ENCODE measurements at regions of chr1 and their contacts with region 1.

Region 1: DNA sequence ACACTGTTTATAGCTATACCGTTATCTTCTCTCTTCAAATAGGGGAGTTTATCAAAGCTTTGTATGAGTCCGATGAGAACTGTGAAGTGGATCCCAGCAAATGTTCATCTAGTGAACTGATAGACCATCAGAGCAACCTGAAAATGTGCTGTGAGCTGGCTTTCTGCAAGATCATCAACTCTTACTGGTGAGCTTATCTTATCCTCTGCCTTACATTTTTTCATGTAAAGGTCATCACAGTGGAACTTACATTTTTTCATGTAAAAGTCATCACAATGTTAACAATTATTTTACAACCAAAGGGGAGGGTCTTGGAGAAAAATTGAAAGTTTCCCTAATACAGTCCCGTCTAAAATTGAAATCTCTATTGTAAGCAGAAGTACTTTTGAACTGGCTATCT is 45.2 kb downstream of the CLEC20A start:
- DNase-seq: peak; percentile 80
- ATAC-seq: peak; percentile 94
- H3K4me3 ChIP-seq: no peak overlapping the region
- H3K27ac ChIP-seq: no peak overlapping the region
- H3K4me1 ChIP-seq: peaks cover 4% of the 10 kb centered on the region
- H3K27me3 ChIP-seq: no peaks in the 10 kb centered on the region
- CTCF ChIP-seq: no peak
- POLR2A ChIP-seq: no peak
- RAD21 ChIP-seq: no peak

Region 2: GRCh38 chr1:177392336-177392735 is 1059.2 kb before region 1 on chr1:
- CTCF ChIA-PET with region 1: no interaction called
- POLR2A ChIA-PET with region 1: no interaction called
- dilution Hi-C with region 1: no loop called
- in situ Hi-C with region 1: no loop called
- intact Hi-C with region 1: no loop called
- DNase-seq: no peak
- ATAC-seq: no peak
- H3K4me3 ChIP-seq: no peak overlapping the region
- H3K27ac ChIP-seq: no peak overlapping the region
- H3K4me1 ChIP-seq: no peaks in the 10 kb centered on the region
- H3K27me3 ChIP-seq: no peaks in the 10 kb centered on the region
- CTCF ChIP-seq: no peak
- POLR2A ChIP-seq: no peak
- RAD21 ChIP-seq: no peak

Region 3: GRCh38 chr1:178354816-178355215 is 96.7 kb before region 1 on chr1:
- CTCF ChIA-PET with region 1: no interaction called
- POLR2A ChIA-PET with region 1: no interaction called
- dilution Hi-C with region 1: no loop called
- in situ Hi-C with region 1: no loop called
- intact Hi-C with region 1: no loop called
- DNase-seq: no peak
- ATAC-seq: no peak
- H3K4me3 ChIP-seq: no peak overlapping the region
- H3K27ac ChIP-seq: no peak overlapping the region
- H3K4me1 ChIP-seq: peaks cover 3% of the 10 kb centered on the region; the same call in 1 of the 2 replicates
- H3K27me3 ChIP-seq: no peaks in the 10 kb centered on the region
- CTCF ChIP-seq: no peak
- POLR2A ChIP-seq: no peak
- RAD21 ChIP-seq: no peak

Region 4: GRCh38 chr1:178417858-178418257 is 33.7 kb before region 1 on chr1:
- CTCF ChIA-PET with region 1: no interaction called
- POLR2A ChIA-PET with region 1: no interaction called
- dilution Hi-C with region 1: no loop called
- in situ Hi-C with region 1: no loop called
- intact Hi-C with region 1: loop called (anchors 5 kb)
- DNase-seq: peak; percentile 91
- ATAC-seq: peak; percentile 87
- H3K4me3 ChIP-seq: no peak overlapping the region
- H3K27ac ChIP-seq: no peak overlapping the region
- H3K4me1 ChIP-seq: peaks cover 1% of the 10 kb centered on the region; the same call in 1 of the 2 replicates
- H3K27me3 ChIP-seq: no peaks in the 10 kb centered on the region
- CTCF ChIP-seq: no peak
- POLR2A ChIP-seq: no peak
- RAD21 ChIP-seq: no peak

Region 5: GRCh38 chr1:179025125-179025974 is 573.8 kb after region 1 on chr1 and contains the start of gene FAM20B:
- CTCF ChIA-PET with region 1: no interaction called
- POLR2A ChIA-PET with region 1: no interaction called
- dilution Hi-C with region 1: no loop called
- in situ Hi-C with region 1: no loop called
- intact Hi-C with region 1: no loop called
- DNase-seq: peak; percentile 88
- ATAC-seq: peak; percentile 95
- H3K4me3 ChIP-seq: peak within 1 kb of the TSS; percentile 90
- H3K27ac ChIP-seq: peak within 1 kb of the TSS; percentile 33
- H3K4me1 ChIP-seq: no peaks in the 10 kb centered on the region
- H3K27me3 ChIP-seq: no peaks in the 10 kb centered on the region
- CTCF ChIP-seq: no peak
- POLR2A ChIP-seq: no peak
- RAD21 ChIP-seq: no peak
- total RNA-seq, gene FAM20B: 36.7 and 38.4 TPM in 2 replicates